CD14-positive monocyte (primary cell): ENCODE measurements at regions of chr13 and their contacts with region 1.

Region 1: DNA sequence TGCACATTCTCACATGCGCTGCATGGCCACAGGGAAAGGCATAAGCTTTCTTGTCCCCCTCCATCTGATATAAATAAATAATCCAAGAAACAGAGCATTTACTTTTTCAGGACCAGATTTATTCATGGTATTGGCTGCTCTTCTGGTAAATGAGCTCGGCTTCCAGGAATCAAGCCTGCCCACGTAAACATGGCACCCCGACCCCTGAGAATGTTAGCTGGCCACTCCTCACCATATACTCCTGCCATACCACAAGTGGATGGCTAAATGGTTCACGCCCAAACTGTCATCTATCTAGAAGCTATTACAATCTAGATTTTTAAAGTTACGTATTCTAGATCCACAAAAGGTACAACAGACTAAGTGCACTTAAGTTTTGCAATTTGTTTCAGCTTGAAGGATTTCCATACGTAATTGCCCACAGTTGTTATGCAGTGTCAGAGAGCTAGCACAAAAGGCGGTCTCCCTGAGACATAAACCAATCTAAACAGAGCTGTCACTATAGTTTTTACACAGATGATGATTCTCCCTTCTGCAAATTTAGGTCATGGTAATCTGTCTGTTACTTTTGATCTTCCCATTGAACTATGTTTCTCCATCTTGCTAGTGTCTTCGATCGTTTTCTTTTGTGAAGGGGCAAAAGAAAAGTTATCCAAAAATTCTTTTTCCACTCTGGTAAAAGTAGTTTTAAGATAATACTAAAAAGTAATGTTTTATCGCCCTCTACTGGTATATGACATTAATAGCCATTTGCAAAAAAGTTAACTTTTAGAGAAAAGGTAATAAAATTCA is 16.2 kb upstream of the FOXO1 start:
- DNase-seq: peak; percentile 5 to 60 (median 8)
- H3K4me3 ChIP-seq: no peak overlapping the region
- H3K4me3 Mint-ChIP-seq: no peak overlapping the region
- H3K27ac ChIP-seq: no peak overlapping the region
- H3K27ac Mint-ChIP-seq: no peak overlapping the region
- H3K4me1 ChIP-seq: no peaks in the 10 kb centered on the region
- H3K4me1 Mint-ChIP-seq: peaks cover 6% of the 10 kb centered on the region
- H3K27me3 ChIP-seq: no peaks in the 10 kb centered on the region
- H3K27me3 Mint-ChIP-seq: peaks cover 0 to 4% (median 2%) of the 10 kb centered on the region in 3 donors
- CTCF ChIP-seq: peak; percentile 76

Region 2: GRCh38 chr13:39684531-39685137 is 998.0 kb before region 1 on chr13:
- intact Hi-C with region 1: loop called (anchors 5 kb)
- DNase-seq: peak in 2 of 3 donors; percentile 21 to 67
- H3K4me3 ChIP-seq: no peak overlapping the region
- H3K4me3 Mint-ChIP-seq: no peak overlapping the region
- H3K27ac ChIP-seq: no peak overlapping the region
- H3K27ac Mint-ChIP-seq: no peak overlapping the region
- H3K4me1 ChIP-seq: peaks cover 6 to 10% of the 10 kb centered on the region in 2 donors
- H3K4me1 Mint-ChIP-seq: peaks cover 11% of the 10 kb centered on the region
- H3K27me3 ChIP-seq: no peaks in the 10 kb centered on the region
- H3K27me3 Mint-ChIP-seq: no peaks in the 10 kb centered on the region
- CTCF ChIP-seq: peak; percentile 63

Region 3: DNA sequence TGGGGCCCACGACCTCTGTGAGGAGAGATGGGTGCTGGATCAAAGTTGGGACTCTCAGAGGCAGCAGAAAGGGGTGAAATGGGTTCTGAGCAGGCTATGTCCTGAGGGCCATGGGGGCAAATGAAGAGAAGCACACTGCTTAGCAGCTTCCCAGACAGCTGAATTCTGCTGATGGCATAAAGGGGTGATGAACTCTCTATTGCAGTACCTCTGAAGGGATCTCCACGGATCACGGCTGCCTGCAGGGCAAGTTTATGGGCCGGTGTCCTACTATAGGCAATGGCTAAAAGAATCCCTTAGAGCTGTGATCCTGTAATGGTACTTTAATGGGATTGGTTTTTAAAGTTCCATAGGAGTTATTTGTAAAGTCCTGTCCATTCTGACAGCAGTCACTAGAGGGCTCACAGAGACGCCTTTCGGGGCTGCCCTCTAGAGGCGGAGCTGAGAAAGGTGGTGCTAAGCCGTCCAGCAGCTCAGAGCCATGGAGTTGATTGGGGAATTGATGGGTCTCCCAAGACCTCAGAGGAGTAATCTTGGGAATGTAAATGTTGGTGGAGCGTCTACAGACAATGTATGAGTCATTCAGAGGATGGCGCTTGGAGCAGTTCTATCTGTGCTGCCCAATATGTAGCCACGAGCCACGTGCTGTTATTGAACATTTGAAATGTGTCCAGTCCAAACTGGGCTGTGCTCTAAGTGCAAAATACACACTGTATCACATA is 739.9 kb before region 1 on chr13:
- intact Hi-C with region 1: loop called in 1 of 2 experiments (anchors 10 kb)
- DNase-seq: peak; percentile 25 to 40 (median 25)
- H3K4me3 ChIP-seq: no peak overlapping the region
- H3K4me3 Mint-ChIP-seq: no peak overlapping the region
- H3K27ac ChIP-seq: no peak overlapping the region
- H3K27ac Mint-ChIP-seq: no peak overlapping the region
- H3K4me1 ChIP-seq: no peaks in the 10 kb centered on the region
- H3K4me1 Mint-ChIP-seq: peaks cover 2% of the 10 kb centered on the region
- H3K27me3 ChIP-seq: no peaks in the 10 kb centered on the region
- H3K27me3 Mint-ChIP-seq: peaks cover 0 to 2% (median 2%) of the 10 kb centered on the region in 3 donors
- CTCF ChIP-seq: peak; percentile 94

Region 4: GRCh38 chr13:40069173-40070044 is 613.2 kb before region 1 on chr13:
- intact Hi-C with region 1: loop called (anchors 2 kb)
- DNase-seq: peak; percentile 46 to 60 (median 59)
- H3K4me3 ChIP-seq: no peak overlapping the region
- H3K4me3 Mint-ChIP-seq: no peak overlapping the region
- H3K27ac ChIP-seq: no peak overlapping the region
- H3K27ac Mint-ChIP-seq: no peak overlapping the region
- H3K4me1 ChIP-seq: no peaks in the 10 kb centered on the region
- H3K4me1 Mint-ChIP-seq: peaks cover 3% of the 10 kb centered on the region
- H3K27me3 ChIP-seq: no peaks in the 10 kb centered on the region
- H3K27me3 Mint-ChIP-seq: peaks cover 1 to 8% (median 2%) of the 10 kb centered on the region in 3 donors
- CTCF ChIP-seq: peak; percentile 86

Region 5: DNA sequence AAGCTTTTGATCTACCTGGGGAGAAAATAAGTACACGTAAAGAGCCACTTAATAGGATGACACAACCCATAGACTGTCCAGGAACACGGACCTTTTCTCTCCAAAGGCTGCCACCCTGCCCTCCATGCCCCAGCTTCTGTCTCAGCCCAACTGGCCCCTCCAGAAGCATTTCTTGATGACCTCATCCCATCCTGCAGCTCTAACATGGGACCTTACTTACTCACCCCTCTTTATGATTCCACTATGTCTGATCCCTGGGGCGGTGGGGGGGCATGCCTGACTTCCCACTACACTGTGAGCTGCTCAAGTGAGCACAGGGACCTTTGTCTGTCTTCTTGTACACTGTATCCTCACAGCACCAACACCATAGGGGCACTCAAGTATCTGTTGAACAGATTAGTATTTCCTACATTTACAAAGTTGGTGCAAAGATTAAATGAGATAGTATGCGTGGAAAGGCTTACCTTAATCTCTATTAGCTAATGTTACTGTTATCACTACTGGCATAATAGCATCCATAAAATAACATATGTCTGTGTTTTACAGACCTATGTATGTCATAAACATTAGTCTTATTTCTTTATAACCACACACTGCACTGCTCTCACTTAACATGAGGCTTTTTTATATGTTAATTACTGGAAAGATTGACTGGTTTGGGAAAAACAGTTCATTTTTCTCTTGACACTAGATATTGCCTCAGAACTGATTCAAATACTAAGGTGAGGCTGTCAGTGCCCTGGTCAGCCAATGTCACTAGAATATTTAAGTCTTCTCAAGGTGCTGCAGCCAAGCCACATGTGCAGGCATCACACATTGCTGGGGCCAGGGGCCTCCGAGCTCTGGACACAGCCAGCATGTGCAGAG is 117.1 kb before region 1 on chr13:
- intact Hi-C with region 1: no loop called
- DNase-seq: peak in 1 of 3 donors; percentile 29
- H3K4me3 ChIP-seq: no peak overlapping the region
- H3K4me3 Mint-ChIP-seq: peak overlapping the region in 1 of 2 donors; percentile 83
- H3K27ac ChIP-seq: no peak overlapping the region
- H3K27ac Mint-ChIP-seq: peak overlapping the region in 1 of 7 donors; percentile 21
- H3K4me1 ChIP-seq: peaks cover 20 to 23% of the 10 kb centered on the region in 2 donors
- H3K4me1 Mint-ChIP-seq: peaks cover 38% of the 10 kb centered on the region
- H3K27me3 ChIP-seq: peaks cover 9 to 34% of the 10 kb centered on the region in 2 donors
- H3K27me3 Mint-ChIP-seq: peaks cover 23 to 52% (median 35%) of the 10 kb centered on the region in 3 donors
- CTCF ChIP-seq: no peak